ENCODE measurements at regions of chr3 and their contacts with region 1.

Region 1: DNA sequence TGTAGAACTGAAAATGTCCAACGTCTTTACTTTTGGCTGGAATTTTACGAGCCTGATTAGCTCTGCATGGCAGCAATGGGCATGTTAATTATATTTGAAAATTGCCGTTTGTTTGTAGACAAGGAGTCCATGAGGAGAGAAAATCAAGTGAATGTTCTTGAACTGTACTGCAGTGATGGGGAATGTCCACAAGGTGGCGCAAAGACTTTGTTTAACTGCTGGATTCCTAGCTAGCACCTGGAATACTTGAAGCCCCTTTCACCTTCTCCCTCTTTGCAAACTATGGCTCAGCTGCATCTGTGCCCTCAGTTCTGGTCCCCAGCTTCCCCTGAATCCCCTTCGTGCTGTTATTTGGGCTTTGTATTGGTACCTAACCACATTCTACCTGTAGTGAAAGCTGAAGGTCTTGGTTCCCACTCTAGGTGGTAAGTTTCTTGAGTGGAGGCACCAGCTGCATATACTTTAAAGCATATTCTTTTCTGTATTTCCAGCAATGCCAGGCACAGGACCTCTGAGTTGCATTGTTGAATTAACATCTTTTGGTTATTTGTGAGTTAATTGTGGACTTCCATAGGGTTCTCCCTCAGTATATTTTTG is 25.3 kb downstream of the EXOG start:
- DNase-seq: peak; percentile 27
- ATAC-seq: peak; percentile 78
- H3K4me3 ChIP-seq: no peak overlapping the region
- H3K27ac ChIP-seq: no peak overlapping the region
- H3K4me1 ChIP-seq: no peaks in the 10 kb centered on the region
- H3K27me3 ChIP-seq: no peaks in the 10 kb centered on the region
- CTCF ChIP-seq: peak; percentile 85 to 95 (median 91)
- EP300 ChIP-seq: no peak
- POLR2A ChIP-seq: no peak
- RAD21 ChIP-seq: peak; percentile 68

Region 2: DNA sequence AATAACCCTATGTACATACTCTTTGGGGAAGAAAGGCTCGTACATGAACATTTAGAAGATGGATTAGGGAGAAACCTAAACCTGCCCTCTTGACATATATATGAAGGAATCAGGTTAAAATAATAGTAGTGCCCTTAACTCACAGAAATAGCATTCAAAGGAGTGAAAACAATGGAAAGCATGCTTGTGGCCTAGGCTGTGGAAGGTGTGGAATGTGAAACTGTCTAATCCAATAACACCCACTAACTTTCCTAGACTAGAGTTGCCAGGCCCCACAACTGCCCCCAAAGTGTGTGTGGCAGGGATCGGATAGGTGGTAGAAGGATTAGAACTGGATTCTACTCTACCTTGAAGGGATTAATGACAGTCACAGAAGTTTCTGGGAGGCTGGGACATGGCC is 1029.7 kb before region 1 on chr3:
- CTCF ChIA-PET with region 1: no interaction called
- POLR2A ChIA-PET with region 1: no interaction called
- RAD21 ChIA-PET with region 1: no interaction called
- SMC1A ChIA-PET with region 1: no interaction called
- in situ Hi-C with region 1: no loop called
- intact Hi-C with region 1: no loop called
- DNase-seq: no peak
- ATAC-seq: no peak
- H3K4me3 ChIP-seq: no peak overlapping the region
- H3K27ac ChIP-seq: no peak overlapping the region
- H3K4me1 ChIP-seq: no peaks in the 10 kb centered on the region
- H3K27me3 ChIP-seq: no peaks in the 10 kb centered on the region; a peak in 1 of 4 replicates
- CTCF ChIP-seq: no peak
- EP300 ChIP-seq: no peak
- POLR2A ChIP-seq: no peak
- RAD21 ChIP-seq: no peak

Region 3: GRCh38 chr3:38507120-38507519 is 14.4 kb before region 1 on chr3:
- CTCF ChIA-PET with region 1: interaction called, 120 read pairs
- POLR2A ChIA-PET with region 1: no interaction called
- RAD21 ChIA-PET with region 1: interaction called, 10 read pairs
- SMC1A ChIA-PET with region 1: interaction called, 21 read pairs
- in situ Hi-C with region 1: no loop called
- intact Hi-C with region 1: no loop called
- DNase-seq: peak; percentile 33
- ATAC-seq: peak; percentile 100
- H3K4me3 ChIP-seq: no peak overlapping the region
- H3K27ac ChIP-seq: no peak overlapping the region
- H3K4me1 ChIP-seq: peaks cover 3% of the 10 kb centered on the region; the same call in 1 of the 2 replicates
- H3K27me3 ChIP-seq: no peaks in the 10 kb centered on the region
- CTCF ChIP-seq: no peak
- EP300 ChIP-seq: peak; percentile 46 to 90; a peak in 2 of 4 replicates
- POLR2A ChIP-seq: no peak
- RAD21 ChIP-seq: no peak

Region 4: GRCh38 chr3:38542401-38543298 is 21.2 kb after region 1 on chr3:
- CTCF ChIA-PET with region 1: interaction called, 15 read pairs
- POLR2A ChIA-PET with region 1: no interaction called
- RAD21 ChIA-PET with region 1: no interaction called
- SMC1A ChIA-PET with region 1: interaction called, 3 read pairs
- in situ Hi-C with region 1: no loop called
- intact Hi-C with region 1: no loop called
- DNase-seq: no peak
- ATAC-seq: no peak
- H3K4me3 ChIP-seq: no peak overlapping the region
- H3K27ac ChIP-seq: no peak overlapping the region
- H3K4me1 ChIP-seq: no peaks in the 10 kb centered on the region
- H3K27me3 ChIP-seq: no peaks in the 10 kb centered on the region
- CTCF ChIP-seq: no peak
- EP300 ChIP-seq: no peak
- POLR2A ChIP-seq: no peak
- RAD21 ChIP-seq: no peak

Region 5: DNA sequence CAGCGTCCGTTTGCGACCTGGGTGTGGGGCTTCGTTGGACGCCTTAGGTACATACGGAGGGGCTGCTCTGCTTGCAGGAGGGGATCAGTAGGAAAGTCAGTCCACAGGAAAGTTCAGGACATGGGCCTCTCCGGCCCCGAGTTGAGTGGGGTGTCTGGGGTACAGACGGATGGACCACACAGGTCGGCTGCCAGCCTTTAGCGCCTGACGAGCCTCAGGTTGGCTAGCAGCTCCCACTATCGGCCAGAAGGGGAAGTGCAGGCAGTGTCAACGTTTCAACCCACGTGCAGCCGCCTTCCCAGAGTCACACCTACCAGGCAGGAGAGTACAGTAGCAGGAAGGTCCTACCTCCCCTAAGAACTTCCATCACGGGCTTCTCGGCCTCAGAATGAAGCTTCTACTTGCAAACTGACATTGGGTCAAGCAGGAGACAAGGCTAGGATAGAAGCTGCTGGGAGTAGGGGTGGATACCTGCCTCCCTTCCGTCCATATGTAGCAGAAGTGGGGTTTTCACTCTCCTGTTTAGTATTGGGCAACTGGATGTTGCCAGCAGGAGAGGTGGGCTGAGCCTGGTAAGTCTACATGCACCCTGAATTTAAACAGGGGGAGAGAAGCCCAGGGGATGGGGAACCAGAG is 129.8 kb after region 1 on chr3:
- CTCF ChIA-PET with region 1: interaction called, 100 read pairs
- POLR2A ChIA-PET with region 1: no interaction called
- RAD21 ChIA-PET with region 1: interaction called, 26 read pairs
- SMC1A ChIA-PET with region 1: interaction called, 13 read pairs
- in situ Hi-C with region 1: loop called (anchors 5 kb)
- intact Hi-C with region 1: loop called (anchors 1 kb)
- DNase-seq: peak; percentile 9
- ATAC-seq: peak; percentile 86
- H3K4me3 ChIP-seq: no peak overlapping the region
- H3K27ac ChIP-seq: no peak overlapping the region
- H3K4me1 ChIP-seq: no peaks in the 10 kb centered on the region; the same call in 1 of the 2 replicates
- H3K27me3 ChIP-seq: peaks cover 8 to 12% of the 10 kb centered on the region in 2 experiments; a peak in 3 of 4 replicates
- CTCF ChIP-seq: peak; percentile 97 to 100 (median 99)
- EP300 ChIP-seq: no peak
- POLR2A ChIP-seq: no peak
- RAD21 ChIP-seq: peak; percentile 77

Region 6: DNA sequence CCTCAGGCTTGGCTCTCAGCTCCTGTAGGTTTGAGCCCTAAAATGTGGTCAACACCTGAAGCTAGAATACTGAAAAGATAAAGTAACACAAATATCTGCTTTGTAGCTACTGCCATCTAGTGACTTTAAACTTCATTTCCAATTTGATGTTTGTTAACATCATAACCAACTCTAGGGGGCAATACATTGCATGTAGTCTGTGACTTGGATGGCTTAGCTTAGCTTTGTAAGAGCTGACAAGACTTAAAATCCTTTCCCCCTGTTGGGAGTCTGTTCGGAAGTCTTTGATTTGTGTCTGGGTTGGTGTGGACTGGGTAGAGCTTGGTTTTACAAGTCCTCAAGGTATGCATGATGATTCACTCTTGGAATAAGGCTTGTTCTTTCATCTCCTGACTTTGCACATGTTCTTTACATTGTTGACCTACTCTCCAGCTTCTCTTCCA is 478.5 kb after region 1 on chr3:
- CTCF ChIA-PET with region 1: interaction called, 71 read pairs
- POLR2A ChIA-PET with region 1: no interaction called
- RAD21 ChIA-PET with region 1: interaction called, 23 read pairs
- SMC1A ChIA-PET with region 1: interaction called, 26 read pairs
- in situ Hi-C with region 1: no loop called
- intact Hi-C with region 1: loop called (anchors 2 kb)
- DNase-seq: peak; percentile 35
- ATAC-seq: peak; percentile 96
- H3K4me3 ChIP-seq: no peak overlapping the region
- H3K27ac ChIP-seq: no peak overlapping the region
- H3K4me1 ChIP-seq: no peaks in the 10 kb centered on the region
- H3K27me3 ChIP-seq: no peaks in the 10 kb centered on the region
- CTCF ChIP-seq: peak; percentile 79 to 95 (median 93)
- EP300 ChIP-seq: no peak
- POLR2A ChIP-seq: no peak
- RAD21 ChIP-seq: peak; percentile 79

Region 7: GRCh38 chr3:39013289-39013688 is 491.8 kb after region 1 on chr3:
- CTCF ChIA-PET with region 1: no interaction called
- POLR2A ChIA-PET with region 1: no interaction called
- RAD21 ChIA-PET with region 1: no interaction called
- SMC1A ChIA-PET with region 1: no interaction called
- in situ Hi-C with region 1: no loop called
- intact Hi-C with region 1: no loop called
- DNase-seq: no peak
- ATAC-seq: no peak
- H3K4me3 ChIP-seq: no peak overlapping the region
- H3K27ac ChIP-seq: no peak overlapping the region
- H3K4me1 ChIP-seq: no peaks in the 10 kb centered on the region
- H3K27me3 ChIP-seq: no peaks in the 10 kb centered on the region
- CTCF ChIP-seq: no peak
- EP300 ChIP-seq: no peak
- POLR2A ChIP-seq: no peak
- RAD21 ChIP-seq: no peak